CD14-positive monocyte (primary cell): ENCODE measurements at regions of chr4 and their contacts with region 1.

Region 1: GRCh38 chr4:3369781-3370674 is 71.7 kb upstream of the HGFAC start:
- DNase-seq: peak; percentile 89 to 97 (median 95)
- H3K4me3 ChIP-seq: peak overlapping the region; percentile 10 to 62 (median 33)
- H3K4me3 Mint-ChIP-seq: peak overlapping the region; percentile 74 to 85
- H3K27ac ChIP-seq: peak overlapping the region; percentile 37 to 87
- H3K27ac Mint-ChIP-seq: peak overlapping the region; percentile 65 to 89 (median 86)
- H3K4me1 ChIP-seq: peaks cover 50 to 58% of the 10 kb centered on the region in 2 donors
- H3K4me1 Mint-ChIP-seq: peaks cover 57% of the 10 kb centered on the region
- H3K27me3 ChIP-seq: peaks cover 0 to 17% of the 10 kb centered on the region in 2 donors
- H3K27me3 Mint-ChIP-seq: peaks cover 24 to 54% (median 36%) of the 10 kb centered on the region in 3 donors
- CTCF ChIP-seq: no peak

Region 2: GRCh38 chr4:3388471-3389232 is 18.6 kb after region 1 on chr4:
- intact Hi-C with region 1: loop called in 1 of 2 experiments (anchors 2 kb)
- DNase-seq: peak; percentile 90 to 94 (median 94)
- H3K4me3 ChIP-seq: peak overlapping the region; percentile 28 to 64 (median 29)
- H3K4me3 Mint-ChIP-seq: peak overlapping the region; percentile 76 to 91
- H3K27ac ChIP-seq: peak overlapping the region; percentile 96
- H3K27ac Mint-ChIP-seq: peak overlapping the region; percentile 98 to 100 (median 99)
- H3K4me1 ChIP-seq: peaks cover 65 to 66% of the 10 kb centered on the region in 2 donors
- H3K4me1 Mint-ChIP-seq: peaks cover 64% of the 10 kb centered on the region
- H3K27me3 ChIP-seq: no peaks in the 10 kb centered on the region
- H3K27me3 Mint-ChIP-seq: peaks cover 0 to 2% (median 0%) of the 10 kb centered on the region in 3 donors
- CTCF ChIP-seq: no peak

Region 3: GRCh38 chr4:3399277-3400194 is 29.5 kb after region 1 on chr4:
- intact Hi-C with region 1: loop called in 1 of 2 experiments (anchors 5 kb)
- DNase-seq: no peak
- H3K4me3 ChIP-seq: no peak overlapping the region
- H3K4me3 Mint-ChIP-seq: no peak overlapping the region
- H3K27ac ChIP-seq: peak overlapping the region in 1 of 2 donors; percentile 57
- H3K27ac Mint-ChIP-seq: peak overlapping the region; percentile 25 to 91 (median 69)
- H3K4me1 ChIP-seq: peaks cover 37 to 49% of the 10 kb centered on the region in 2 donors
- H3K4me1 Mint-ChIP-seq: peaks cover 43% of the 10 kb centered on the region
- H3K27me3 ChIP-seq: no peaks in the 10 kb centered on the region
- H3K27me3 Mint-ChIP-seq: peaks cover 0 to 2% (median 0%) of the 10 kb centered on the region in 3 donors
- CTCF ChIP-seq: no peak

Region 4: DNA sequence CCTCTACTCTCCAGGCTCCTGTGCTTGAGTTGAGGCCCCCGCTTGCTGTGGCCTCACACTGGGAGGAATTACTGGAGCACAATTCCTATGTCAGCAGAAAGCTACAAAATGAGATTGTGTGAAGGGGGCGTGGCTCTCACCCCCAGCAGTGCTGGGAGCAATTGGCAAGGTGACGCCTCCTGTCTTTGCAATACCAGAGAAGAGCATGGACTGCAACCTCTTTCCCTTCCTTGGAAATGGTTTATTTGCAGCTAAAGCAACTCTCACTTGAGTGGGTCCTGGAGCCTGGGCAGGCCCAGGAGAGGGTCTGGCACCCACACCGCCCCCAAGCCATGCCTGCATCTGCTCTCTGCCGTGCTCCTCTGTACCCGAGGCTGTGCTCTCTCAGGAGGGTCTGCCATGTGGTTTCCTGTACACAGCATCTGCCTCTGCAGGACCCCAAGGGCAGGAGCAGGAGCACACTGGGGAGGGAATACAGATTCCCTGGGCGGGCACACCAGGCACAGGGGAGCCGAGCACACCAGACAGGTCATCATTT is 38.8 kb after region 1 on chr4:
- intact Hi-C with region 1: loop called (anchors 5 kb)
- DNase-seq: no peak
- H3K4me3 ChIP-seq: no peak overlapping the region
- H3K4me3 Mint-ChIP-seq: no peak overlapping the region
- H3K27ac ChIP-seq: no peak overlapping the region
- H3K27ac Mint-ChIP-seq: no peak overlapping the region
- H3K4me1 ChIP-seq: peaks cover under 1 to 12% of the 10 kb centered on the region in 2 donors
- H3K4me1 Mint-ChIP-seq: peaks cover 14% of the 10 kb centered on the region
- H3K27me3 ChIP-seq: no peaks in the 10 kb centered on the region
- H3K27me3 Mint-ChIP-seq: peaks cover 0 to 4% (median 1%) of the 10 kb centered on the region in 3 donors
- CTCF ChIP-seq: no peak